Activated T-helper 2 cell treated with anti-CD3 and anti-CD28 coated beads, Interferon-gamma antibody, Interleukin-2, Interleukin-4, amounts not matched to agents 10 μg/mL and 5 μg/mL and 100 μg/mL, durations not matched to agents 14 hours and 24 hours and 36 hours (primary cell): ENCODE measurements at regions of chr1 and their contacts with region 1.

Region 1: GRCh38 chr1:23098463-23099170 is 70.0 kb downstream of the LUZP1 start:
- DNase-seq: peak; percentile 43
- H3K4me3 Mint-ChIP-seq: no peak overlapping the region
- H3K27ac Mint-ChIP-seq: peak overlapping the region; percentile 48
- H3K4me1 Mint-ChIP-seq: peaks cover 40% of the 10 kb centered on the region
- H3K27me3 Mint-ChIP-seq: no peaks in the 10 kb centered on the region

Region 2: DNA sequence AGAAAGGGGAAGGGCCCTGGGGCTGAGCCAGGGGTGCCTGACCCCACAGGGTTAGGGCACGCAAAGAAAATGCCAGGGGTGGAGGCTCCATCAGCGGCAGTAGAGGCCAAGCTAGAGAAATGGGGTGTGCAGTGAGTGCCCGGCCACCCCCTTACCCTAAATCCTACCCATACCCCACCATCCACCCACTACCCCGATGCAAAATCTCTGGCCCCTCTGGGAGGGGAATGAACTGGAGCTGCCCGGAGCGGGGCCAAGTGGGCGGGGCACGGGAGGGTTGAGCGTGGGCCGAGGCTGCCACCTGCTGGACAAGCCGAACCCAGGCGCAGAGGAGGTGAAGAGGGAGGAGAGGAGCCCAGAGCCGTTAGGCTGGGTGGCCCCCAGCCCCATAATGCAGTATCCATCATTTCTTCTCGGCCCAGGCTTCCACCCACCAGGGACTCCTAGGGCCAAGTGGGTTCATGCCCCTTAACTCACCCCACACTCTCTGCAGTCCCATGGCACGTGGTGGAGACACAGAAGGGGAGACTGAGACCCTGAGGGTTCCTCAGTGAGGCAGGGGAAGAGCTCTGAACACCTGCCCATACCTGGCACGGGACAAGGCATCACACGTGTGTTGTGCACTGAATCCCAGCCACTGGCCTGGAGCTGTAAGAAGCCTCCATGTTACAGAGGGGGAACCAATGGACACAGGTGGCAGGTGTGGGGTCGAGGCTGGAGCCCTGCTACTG is 456.5 kb before region 1 on chr1:
- intact Hi-C with region 1: no loop called
- DNase-seq: peak; percentile 44
- H3K4me3 Mint-ChIP-seq: no peak overlapping the region
- H3K27ac Mint-ChIP-seq: no peak overlapping the region
- H3K4me1 Mint-ChIP-seq: no peaks in the 10 kb centered on the region
- H3K27me3 Mint-ChIP-seq: no peaks in the 10 kb centered on the region

Region 3: GRCh38 chr1:22794647-22795365 is 303.8 kb before region 1 on chr1:
- intact Hi-C with region 1: no loop called
- DNase-seq: no peak
- H3K4me3 Mint-ChIP-seq: no peak overlapping the region
- H3K27ac Mint-ChIP-seq: no peak overlapping the region
- H3K4me1 Mint-ChIP-seq: no peaks in the 10 kb centered on the region
- H3K27me3 Mint-ChIP-seq: no peaks in the 10 kb centered on the region

Region 4: DNA sequence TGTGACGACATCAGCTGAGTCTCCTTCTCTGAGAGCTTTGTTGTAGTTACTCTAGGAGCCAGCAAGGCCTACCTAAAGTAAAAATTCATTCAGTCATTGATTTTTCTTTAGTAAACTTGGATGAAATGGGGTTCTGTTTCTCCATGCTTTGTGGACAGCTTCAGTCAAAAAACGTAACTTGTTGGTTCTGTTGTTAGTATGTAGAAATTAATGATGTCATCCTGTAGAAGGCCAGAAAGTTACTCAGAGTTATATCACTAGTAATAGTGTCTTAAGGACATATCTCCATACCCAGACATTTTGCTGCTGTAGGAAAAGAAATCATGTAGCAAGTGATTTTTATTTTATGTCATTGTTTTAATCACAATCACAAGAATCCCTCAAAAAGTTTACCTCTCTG is 36.3 kb before region 1 on chr1:
- intact Hi-C with region 1: no loop called
- DNase-seq: no peak
- H3K4me3 Mint-ChIP-seq: no peak overlapping the region
- H3K27ac Mint-ChIP-seq: no peak overlapping the region
- H3K4me1 Mint-ChIP-seq: peaks cover 2% of the 10 kb centered on the region
- H3K27me3 Mint-ChIP-seq: no peaks in the 10 kb centered on the region

Region 5: GRCh38 chr1:23108918-23109533 is 10.4 kb after region 1 on chr1:
- intact Hi-C with region 1: loop called (anchors 1 kb)
- DNase-seq: no peak
- H3K4me3 Mint-ChIP-seq: no peak overlapping the region
- H3K27ac Mint-ChIP-seq: peak overlapping the region; percentile 3
- H3K4me1 Mint-ChIP-seq: peaks cover 54% of the 10 kb centered on the region
- H3K27me3 Mint-ChIP-seq: no peaks in the 10 kb centered on the region

Region 6: GRCh38 chr1:23118957-23119792 is 20.6 kb after region 1 on chr1:
- intact Hi-C with region 1: loop called (anchors 2 kb)
- DNase-seq: peak; percentile 50
- H3K4me3 Mint-ChIP-seq: peak overlapping the region; percentile 27
- H3K27ac Mint-ChIP-seq: peak overlapping the region; percentile 61
- H3K4me1 Mint-ChIP-seq: peaks cover 51% of the 10 kb centered on the region
- H3K27me3 Mint-ChIP-seq: no peaks in the 10 kb centered on the region

Region 7: DNA sequence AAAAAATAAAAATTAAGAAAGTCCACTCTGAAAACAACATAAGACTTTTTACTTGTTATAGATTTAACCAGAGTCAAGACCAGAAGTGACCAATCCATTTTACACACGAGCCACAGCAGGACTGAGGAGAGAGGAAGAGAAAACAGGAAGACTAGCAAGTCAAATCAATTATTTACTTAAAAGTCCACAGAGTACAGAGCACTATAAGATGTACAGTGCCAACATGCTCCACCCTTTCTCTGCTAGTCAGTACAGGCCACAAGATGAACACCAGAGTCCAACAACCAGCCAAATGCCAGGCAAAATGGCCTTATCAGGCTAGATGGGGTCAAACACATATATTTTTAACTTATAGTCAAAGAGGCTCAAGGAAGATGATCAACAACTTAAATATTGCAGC is 50.5 kb after region 1 on chr1:
- intact Hi-C with region 1: loop called (anchors 1 kb)
- DNase-seq: no peak
- H3K4me3 Mint-ChIP-seq: no peak overlapping the region
- H3K27ac Mint-ChIP-seq: peak overlapping the region; percentile 13
- H3K4me1 Mint-ChIP-seq: peaks cover 29% of the 10 kb centered on the region
- H3K27me3 Mint-ChIP-seq: no peaks in the 10 kb centered on the region

Region 8: GRCh38 chr1:23168457-23169194 is 70.0 kb after region 1 on chr1 and contains the start of gene LUZP1:
- intact Hi-C with region 1: loop called (anchors 1 kb)
- DNase-seq: peak; percentile 77
- H3K4me3 Mint-ChIP-seq: peak within 1 kb of the TSS; percentile 98
- H3K27ac Mint-ChIP-seq: peak within 1 kb of the TSS; percentile 85
- H3K4me1 Mint-ChIP-seq: peaks cover 22% of the 10 kb centered on the region
- H3K27me3 Mint-ChIP-seq: peaks cover 2% of the 10 kb centered on the region
- total RNA-seq, gene LUZP1: 19.7 and 21.6 TPM in 2 replicates

Region 9: DNA sequence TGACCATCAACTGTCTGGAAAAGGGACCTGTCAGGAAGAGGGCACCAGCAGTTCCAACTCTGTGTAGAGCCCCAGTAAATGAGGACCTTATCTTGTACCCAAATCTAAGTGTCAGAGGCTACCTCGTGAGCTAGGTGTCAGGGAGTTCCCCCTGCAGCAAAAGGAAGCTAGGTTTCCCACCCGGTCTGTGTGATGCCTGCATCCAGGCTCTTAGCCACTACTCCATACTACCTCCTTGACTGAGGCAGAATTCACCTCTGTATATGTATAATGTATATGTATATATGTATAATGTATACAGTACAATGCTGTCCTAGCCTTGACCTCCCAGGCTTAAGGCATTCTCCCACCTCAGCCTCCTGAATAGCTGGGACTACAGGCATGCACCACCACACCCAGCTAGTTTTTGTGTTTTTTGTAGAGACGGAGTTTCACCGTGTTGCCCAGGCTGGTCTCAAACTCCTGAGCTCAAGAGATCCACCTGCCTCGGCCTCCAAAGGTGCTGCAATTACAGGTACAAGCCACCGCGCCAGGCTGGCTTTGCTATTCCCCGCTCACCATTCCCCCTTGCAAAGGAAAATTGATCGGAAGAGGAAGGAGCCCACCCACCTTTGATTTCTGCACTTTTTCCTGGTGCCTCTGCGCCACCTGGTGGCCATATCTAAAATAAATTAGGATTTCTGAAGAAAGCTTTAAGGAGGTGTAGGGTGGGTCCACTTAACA is 85.8 kb after region 1 on chr1:
- intact Hi-C with region 1: loop called (anchors 1 kb)
- DNase-seq: no peak
- H3K4me3 Mint-ChIP-seq: peak overlapping the region; percentile 37
- H3K27ac Mint-ChIP-seq: no peak overlapping the region
- H3K4me1 Mint-ChIP-seq: peaks cover 4% of the 10 kb centered on the region
- H3K27me3 Mint-ChIP-seq: peaks cover 10% of the 10 kb centered on the region

Region 10: GRCh38 chr1:23344111-23344986 is 245.7 kb after region 1 on chr1 and contains the start of gene HNRNPR:
- intact Hi-C with region 1: loop called (anchors 5 kb)
- DNase-seq: peak; percentile 99
- H3K4me3 Mint-ChIP-seq: peak within 1 kb of the TSS; percentile 92
- H3K27ac Mint-ChIP-seq: peak within 1 kb of the TSS; percentile 97
- H3K4me1 Mint-ChIP-seq: peaks cover 36% of the 10 kb centered on the region
- H3K27me3 Mint-ChIP-seq: no peaks in the 10 kb centered on the region
- total RNA-seq, gene HNRNPR: 231 and 237 TPM in 2 replicates